ENCODE measurements at regions of chr17 and their contacts with region 1.

Region 1: GRCh38 chr17:64506576-64507477 is at the start of gene CEP95:
- DNase-seq: peak; percentile 99
- ATAC-seq: peak; percentile 62
- H3K4me3 ChIP-seq: peak within 1 kb of the TSS; percentile 97 to 100 (median 99)
- H3K4me3 Mint-ChIP-seq: peak within 1 kb of the TSS; percentile 97
- H3K27ac ChIP-seq: peak within 1 kb of the TSS; percentile 99 to 100
- H3K27ac Mint-ChIP-seq: peak within 1 kb of the TSS; percentile 99
- H3K4me1 ChIP-seq: peaks cover 31 to 32% of the 10 kb centered on the region in 2 donors
- H3K4me1 Mint-ChIP-seq: peaks cover 48% of the 10 kb centered on the region
- H3K27me3 ChIP-seq: no peaks in the 10 kb centered on the region
- H3K27me3 Mint-ChIP-seq: no peaks in the 10 kb centered on the region
- CTCF ChIP-seq: no peak
- total RNA-seq, gene CEP95: 122 and 129 TPM in 2 replicates

Region 2: DNA sequence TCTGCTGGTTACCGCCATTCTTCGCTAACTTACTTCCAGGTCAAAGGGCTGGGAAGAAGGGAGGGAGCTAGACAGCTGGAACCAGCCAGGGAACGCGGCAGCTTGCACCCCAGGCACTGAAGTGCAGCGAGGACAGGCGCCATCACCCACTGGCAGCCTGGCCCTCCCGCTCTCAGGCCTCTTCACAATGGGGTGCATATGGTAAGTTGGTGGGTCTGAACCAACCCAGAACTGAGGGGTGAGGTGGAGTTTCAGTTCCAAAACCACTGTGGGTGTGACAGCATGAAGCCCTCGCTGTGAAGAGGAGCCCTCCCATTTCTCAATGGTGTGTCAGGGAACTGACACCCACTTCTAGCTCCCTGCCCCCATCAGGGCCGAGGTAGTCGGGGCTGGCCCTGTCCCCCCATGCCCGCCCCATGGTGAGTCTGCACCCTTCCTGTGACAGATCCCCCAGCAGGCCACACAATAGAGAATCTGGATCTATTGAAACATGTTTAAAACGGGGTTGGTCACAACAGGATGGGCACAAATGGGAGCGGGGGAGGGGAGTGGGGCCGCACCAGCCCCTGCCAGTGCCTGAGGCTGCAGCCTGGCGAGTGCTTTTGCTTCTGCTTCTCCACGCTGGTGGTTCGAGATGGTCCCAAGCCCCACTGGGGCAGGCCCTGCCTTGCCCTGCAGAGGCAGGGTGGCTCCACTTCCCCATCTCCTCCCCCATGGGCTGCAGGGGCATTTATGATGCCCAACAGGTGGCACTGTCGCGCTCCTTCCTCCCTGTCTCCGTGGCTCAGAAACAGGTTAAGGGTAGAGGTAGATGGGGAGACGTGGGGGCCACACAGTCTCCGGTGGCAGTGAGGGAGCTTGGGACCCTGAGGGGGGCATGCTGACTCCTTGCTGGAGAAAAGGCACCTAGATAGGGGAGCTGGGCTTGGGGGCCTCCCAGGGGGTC is 809.2 kb before region 1 on chr17:
- CTCF ChIA-PET with region 1: no interaction called
- POLR2A ChIA-PET with region 1: interaction called, 6 read pairs
- intact Hi-C with region 1: loop called (anchors 5 kb)
- DNase-seq: peak; percentile 96
- ATAC-seq: peak; percentile 39
- H3K4me3 ChIP-seq: peak overlapping the region; percentile 70 to 100 (median 96)
- H3K4me3 Mint-ChIP-seq: peak overlapping the region; percentile 94
- H3K27ac ChIP-seq: peak overlapping the region; percentile 82 to 95
- H3K27ac Mint-ChIP-seq: peak overlapping the region; percentile 98
- H3K4me1 ChIP-seq: peaks cover 54 to 66% of the 10 kb centered on the region in 2 donors
- H3K4me1 Mint-ChIP-seq: peaks cover 66% of the 10 kb centered on the region
- H3K27me3 ChIP-seq: no peaks in the 10 kb centered on the region
- H3K27me3 Mint-ChIP-seq: no peaks in the 10 kb centered on the region
- CTCF ChIP-seq: peak; percentile 85

Region 3: DNA sequence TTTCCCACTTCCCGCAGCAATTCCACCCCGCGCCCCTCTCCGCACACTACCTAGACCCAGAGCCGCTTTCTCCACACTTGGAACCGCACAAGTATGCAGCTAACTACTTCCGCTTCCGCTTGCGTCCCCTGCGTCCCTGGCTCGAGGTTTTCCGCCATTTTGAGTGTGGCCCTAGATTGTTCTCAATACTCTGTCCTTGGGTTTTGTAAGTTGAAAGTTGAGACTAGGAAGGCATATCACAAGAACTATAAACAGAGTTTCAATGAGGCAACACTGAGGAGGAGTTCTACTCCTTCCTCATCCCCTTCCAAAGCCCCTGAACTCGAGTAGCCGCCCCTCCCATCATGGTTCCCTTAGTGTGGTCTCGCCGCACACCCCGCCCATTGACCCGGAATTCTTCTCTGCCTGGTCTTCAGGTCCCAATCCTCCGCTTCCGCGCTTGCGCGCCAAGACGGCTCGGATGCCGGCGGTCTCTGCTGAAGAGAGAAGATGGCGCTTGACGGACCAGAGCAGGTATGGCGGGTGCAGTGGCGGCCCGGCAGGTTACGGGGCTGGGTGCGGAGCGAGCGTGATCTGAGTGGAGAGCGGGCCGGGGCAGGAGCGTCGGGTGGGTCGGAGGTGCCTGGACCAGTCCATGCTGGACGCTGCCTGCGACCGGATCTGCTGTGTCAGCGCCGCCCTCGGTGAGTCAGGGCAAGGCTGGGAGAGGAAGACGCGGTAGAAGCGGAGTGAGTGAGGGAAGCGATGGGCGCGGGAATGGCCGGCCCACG is 679.6 kb before region 1 on chr17 and contains the starts of genes FTSJ3 and PSMC5:
- CTCF ChIA-PET with region 1: no interaction called
- POLR2A ChIA-PET with region 1: interaction called, 3 read pairs
- intact Hi-C with region 1: loop called (anchors 5 kb)
- DNase-seq: peak; percentile 98
- ATAC-seq: peak; percentile 95
- H3K4me3 ChIP-seq: peak within 1 kb of the TSS; percentile 78 to 92 (median 81)
- H3K4me3 Mint-ChIP-seq: peak within 1 kb of the TSS; percentile 98
- H3K27ac ChIP-seq: peak within 1 kb of the TSS; percentile 70 to 92
- H3K27ac Mint-ChIP-seq: peak within 1 kb of the TSS; percentile 98
- H3K4me1 ChIP-seq: peaks cover 38 to 53% of the 10 kb centered on the region in 2 donors
- H3K4me1 Mint-ChIP-seq: peaks cover 73% of the 10 kb centered on the region
- H3K27me3 ChIP-seq: no peaks in the 10 kb centered on the region
- H3K27me3 Mint-ChIP-seq: no peaks in the 10 kb centered on the region
- CTCF ChIP-seq: peak; percentile 72
- total RNA-seq, gene FTSJ3: 75.9 and 78.2 TPM in 2 replicates
- total RNA-seq, gene PSMC5: 84.7 and 87.1 TPM in 2 replicates

Region 4: DNA sequence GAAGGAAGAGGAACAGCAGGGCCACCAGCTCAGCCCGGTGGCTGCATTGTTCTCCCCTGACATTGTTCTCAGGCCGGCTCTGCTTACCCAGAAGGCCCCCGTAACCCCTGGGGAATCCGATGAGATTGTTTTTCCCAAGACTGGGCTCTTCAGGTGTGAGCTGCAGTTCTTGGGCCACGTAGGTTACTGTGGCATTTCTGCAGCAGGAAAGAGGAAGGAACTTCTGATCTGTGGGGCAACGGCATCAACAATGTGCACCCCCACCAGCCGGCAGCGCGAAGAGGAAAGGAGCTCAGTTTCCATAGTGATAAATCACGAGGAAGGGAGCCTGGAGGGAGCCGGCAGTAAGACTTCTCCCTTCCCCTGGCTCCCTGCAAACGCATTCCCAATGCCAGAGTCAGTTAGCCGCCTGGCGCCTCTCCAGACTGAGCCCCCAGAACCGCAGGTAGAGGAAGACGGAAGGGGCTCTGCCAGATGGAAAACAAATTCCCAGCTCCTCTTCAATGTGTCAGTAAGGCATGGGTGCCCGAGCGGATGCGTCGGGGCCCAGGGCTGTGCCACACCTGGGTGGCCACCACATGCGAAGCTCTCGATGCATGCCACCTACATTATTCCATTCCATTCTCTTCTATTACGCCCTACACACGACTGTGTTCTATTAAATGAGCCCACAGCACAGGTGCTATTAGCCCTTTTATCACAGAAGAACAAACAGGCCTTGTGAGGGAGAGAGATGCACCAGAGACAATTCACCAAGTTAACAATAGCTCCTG is 94.6 kb before region 1 on chr17:
- CTCF ChIA-PET with region 1: interaction called, 5 read pairs
- POLR2A ChIA-PET with region 1: interaction called, 44 read pairs
- intact Hi-C with region 1: loop called (anchors 2 kb)
- DNase-seq: peak; percentile 79
- ATAC-seq: peak; percentile 76
- H3K4me3 ChIP-seq: peak overlapping the region; percentile 47 to 71 (median 60)
- H3K4me3 Mint-ChIP-seq: peak overlapping the region; percentile 92
- H3K27ac ChIP-seq: peak overlapping the region; percentile 83 to 89
- H3K27ac Mint-ChIP-seq: peak overlapping the region; percentile 96
- H3K4me1 ChIP-seq: peaks cover 42 to 54% of the 10 kb centered on the region in 2 donors
- H3K4me1 Mint-ChIP-seq: peaks cover 50% of the 10 kb centered on the region
- H3K27me3 ChIP-seq: no peaks in the 10 kb centered on the region
- H3K27me3 Mint-ChIP-seq: no peaks in the 10 kb centered on the region
- CTCF ChIP-seq: no peak

Region 5: DNA sequence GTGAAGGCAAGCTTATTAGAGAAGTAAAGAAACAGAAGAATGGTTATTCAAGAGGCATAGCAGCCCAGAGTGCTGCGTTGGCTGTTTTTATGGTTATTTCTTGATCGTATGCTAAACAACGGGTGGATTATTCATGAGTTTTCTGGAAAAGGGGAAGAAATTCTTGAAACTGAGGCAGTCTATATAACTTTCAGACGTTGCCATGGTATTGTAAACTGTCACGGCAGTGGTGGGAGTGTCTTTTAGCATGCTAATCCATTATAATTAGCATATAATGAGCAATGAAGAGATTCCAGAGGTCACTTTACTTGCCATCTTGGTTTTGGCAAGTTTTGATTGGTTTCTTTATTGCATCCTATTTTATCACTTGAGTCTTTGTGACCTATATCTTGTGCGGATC is 75.3 kb before region 1 on chr17:
- CTCF ChIA-PET with region 1: no interaction called
- POLR2A ChIA-PET with region 1: no interaction called
- intact Hi-C with region 1: no loop called
- DNase-seq: no peak
- ATAC-seq: no peak
- H3K4me3 ChIP-seq: no peak overlapping the region
- H3K4me3 Mint-ChIP-seq: no peak overlapping the region
- H3K27ac ChIP-seq: no peak overlapping the region
- H3K27ac Mint-ChIP-seq: no peak overlapping the region
- H3K4me1 ChIP-seq: no peaks in the 10 kb centered on the region
- H3K4me1 Mint-ChIP-seq: no peaks in the 10 kb centered on the region
- H3K27me3 ChIP-seq: no peaks in the 10 kb centered on the region
- H3K27me3 Mint-ChIP-seq: no peaks in the 10 kb centered on the region
- CTCF ChIP-seq: no peak

Region 6: GRCh38 chr17:64491034-64491859 is 15.6 kb before region 1 on chr17:
- CTCF ChIA-PET with region 1: interaction called, 35 read pairs
- POLR2A ChIA-PET with region 1: interaction called, 97 read pairs
- intact Hi-C with region 1: loop called (anchors 1 kb)
- DNase-seq: peak; percentile 61
- ATAC-seq: peak; percentile 65
- H3K4me3 ChIP-seq: no peak overlapping the region
- H3K4me3 Mint-ChIP-seq: no peak overlapping the region
- H3K27ac ChIP-seq: no peak overlapping the region
- H3K27ac Mint-ChIP-seq: no peak overlapping the region
- H3K4me1 ChIP-seq: peaks cover 20 to 21% of the 10 kb centered on the region in 2 donors
- H3K4me1 Mint-ChIP-seq: peaks cover 24% of the 10 kb centered on the region
- H3K27me3 ChIP-seq: no peaks in the 10 kb centered on the region
- H3K27me3 Mint-ChIP-seq: no peaks in the 10 kb centered on the region
- CTCF ChIP-seq: peak; percentile 68

Region 7: DNA sequence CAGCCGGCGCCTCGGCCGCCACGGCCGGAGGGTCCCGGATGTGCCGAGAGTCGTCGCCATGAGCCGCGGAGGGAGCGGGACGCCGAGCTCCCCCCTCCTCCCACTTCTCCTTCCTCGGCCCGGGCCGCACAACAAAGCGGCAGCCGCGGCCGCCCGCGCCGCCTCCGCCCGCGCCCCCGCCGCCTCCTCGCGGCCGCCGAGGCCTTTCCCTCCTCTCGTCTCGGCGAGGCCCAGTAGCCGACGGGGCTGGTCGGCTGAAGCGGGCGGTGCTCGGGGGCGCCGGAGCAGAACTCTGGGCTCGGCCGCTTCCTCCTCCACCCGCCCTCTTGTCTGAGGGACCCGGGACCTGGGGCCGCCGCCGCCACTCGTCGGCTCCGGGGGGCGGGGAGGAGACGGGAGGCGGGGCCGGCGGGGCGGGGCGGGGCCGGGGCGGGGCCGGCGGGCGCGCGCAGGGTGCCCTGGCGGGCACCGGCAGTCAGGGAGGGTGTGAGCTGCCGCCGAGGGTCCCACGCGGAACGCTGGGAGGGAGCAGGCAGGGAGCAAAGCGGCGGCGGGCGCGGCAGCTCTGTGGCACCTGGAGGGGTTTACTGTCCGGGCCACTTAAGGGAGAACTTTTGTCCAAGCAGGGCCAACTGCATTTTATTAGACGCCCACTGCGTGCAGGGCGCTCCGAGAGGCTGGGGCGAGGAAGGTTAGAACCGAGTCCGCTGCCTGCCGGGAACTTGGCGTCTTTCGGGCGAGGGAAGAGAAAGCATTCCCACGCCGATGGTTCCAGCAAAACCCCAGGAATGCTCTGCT is 155.3 kb after region 1 on chr17 and contains the start of gene SMURF2:
- CTCF ChIA-PET with region 1: no interaction called
- POLR2A ChIA-PET with region 1: interaction called, 15 read pairs
- intact Hi-C with region 1: no loop called
- DNase-seq: peak; percentile 90
- ATAC-seq: peak; percentile 89
- H3K4me3 ChIP-seq: peak within 1 kb of the TSS; percentile 50 to 84 (median 68)
- H3K4me3 Mint-ChIP-seq: peak within 1 kb of the TSS; percentile 97
- H3K27ac ChIP-seq: peak within 1 kb of the TSS; percentile 59 to 75
- H3K27ac Mint-ChIP-seq: peak within 1 kb of the TSS; percentile 98
- H3K4me1 ChIP-seq: peaks cover 11 to 21% of the 10 kb centered on the region in 2 donors
- H3K4me1 Mint-ChIP-seq: peaks cover 28% of the 10 kb centered on the region
- H3K27me3 ChIP-seq: no peaks in the 10 kb centered on the region
- H3K27me3 Mint-ChIP-seq: no peaks in the 10 kb centered on the region
- CTCF ChIP-seq: peak; percentile 12
- total RNA-seq, gene SMURF2: 32.8 and 37.1 TPM in 2 replicates